WTC11 (cell line): ENCODE measurements at regions of chr18 and their contacts with region 1.

Region 1: GRCh38 chr18:66393463-66393862 is 210.4 kb downstream of the CDH19 start:
- DNase-seq: no peak
- ATAC-seq: peak; percentile 86
- H3K4me3 Mint-ChIP-seq: no peak overlapping the region
- H3K27ac Mint-ChIP-seq: no peak overlapping the region
- H3K4me1 Mint-ChIP-seq: no peaks in the 10 kb centered on the region
- H3K27me3 Mint-ChIP-seq: no peaks in the 10 kb centered on the region; the same call in 1 of the 2 replicates
- CTCF ChIP-seq: no peak

Region 2: DNA sequence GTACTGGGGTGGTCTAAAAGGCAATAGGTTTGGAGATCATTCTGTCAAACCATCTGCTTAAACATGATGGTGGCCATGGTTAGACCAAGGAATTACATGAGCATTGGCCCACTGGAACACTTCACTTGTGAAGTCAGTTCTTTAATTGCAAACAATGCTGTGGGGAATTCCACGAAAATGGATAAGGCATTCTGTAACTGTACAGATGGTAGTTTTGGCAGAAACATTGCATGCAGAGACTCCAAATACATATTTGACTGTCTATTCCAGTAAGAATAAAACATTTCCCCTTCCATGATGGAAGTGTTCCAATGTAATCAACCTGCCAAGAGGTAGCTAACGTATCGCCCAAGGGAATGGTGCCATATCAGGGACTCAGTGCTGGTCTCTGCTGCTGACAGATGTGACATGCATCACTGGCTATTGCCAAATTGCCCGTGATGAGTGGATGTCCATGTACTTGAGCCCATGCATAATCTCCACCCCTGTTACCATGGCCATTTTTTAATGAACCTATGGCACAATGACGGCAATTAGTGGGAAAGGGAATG is 224.7 kb before region 1 on chr18:
- CTCF ChIA-PET with region 1: no interaction called
- POLR2A ChIA-PET with region 1: no interaction called
- DNase-seq: no peak
- ATAC-seq: no peak
- H3K4me3 Mint-ChIP-seq: no peak overlapping the region
- H3K27ac Mint-ChIP-seq: no peak overlapping the region
- H3K4me1 Mint-ChIP-seq: no peaks in the 10 kb centered on the region
- H3K27me3 Mint-ChIP-seq: no peaks in the 10 kb centered on the region
- CTCF ChIP-seq: no peak

Region 3: DNA sequence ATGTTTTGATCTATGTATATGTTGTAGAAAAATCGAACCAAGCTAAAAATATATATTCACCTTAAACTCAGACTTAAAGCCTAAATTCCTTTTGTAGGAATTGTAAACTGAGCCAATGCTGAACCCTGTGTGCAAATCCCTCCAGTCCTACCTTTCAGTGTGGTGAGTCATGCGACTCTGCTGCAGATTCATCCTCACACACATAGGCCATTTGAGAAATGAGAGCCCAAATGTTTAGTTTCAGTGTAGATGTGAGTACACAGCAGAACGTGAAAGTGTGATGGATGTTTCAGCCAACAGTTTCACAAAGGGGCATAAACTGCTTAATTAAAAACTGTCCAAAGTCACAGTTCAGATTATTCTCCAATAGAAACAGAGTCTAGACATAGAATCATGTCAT is 17.2 kb after region 1 on chr18:
- CTCF ChIA-PET with region 1: no interaction called
- POLR2A ChIA-PET with region 1: no interaction called
- DNase-seq: no peak
- ATAC-seq: no peak
- H3K4me3 Mint-ChIP-seq: no peak overlapping the region
- H3K27ac Mint-ChIP-seq: no peak overlapping the region
- H3K4me1 Mint-ChIP-seq: peaks cover 14% of the 10 kb centered on the region
- H3K27me3 Mint-ChIP-seq: no peaks in the 10 kb centered on the region
- CTCF ChIP-seq: no peak

Region 4: DNA sequence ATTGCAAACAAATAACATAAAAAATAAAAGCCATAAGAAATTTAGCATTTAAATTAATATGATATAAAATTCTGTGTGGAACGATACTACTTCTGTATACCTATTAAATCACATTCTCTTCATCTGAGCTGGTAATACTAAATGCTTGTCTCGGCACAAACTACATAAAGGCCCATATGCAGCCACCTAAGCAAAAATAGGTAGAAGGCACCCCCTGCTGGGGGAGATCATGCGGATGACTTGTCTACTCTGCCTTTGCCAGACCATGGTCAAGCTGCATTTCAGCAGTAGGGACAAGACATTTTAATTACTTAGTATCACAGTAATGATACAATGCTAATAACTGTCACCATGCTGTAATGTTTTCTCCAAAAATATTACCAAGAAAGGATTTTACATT is 102.4 kb after region 1 on chr18:
- CTCF ChIA-PET with region 1: interaction called, 10 read pairs
- POLR2A ChIA-PET with region 1: no interaction called
- DNase-seq: peak; percentile 83
- ATAC-seq: peak; percentile 90
- H3K4me3 Mint-ChIP-seq: no peak overlapping the region
- H3K27ac Mint-ChIP-seq: no peak overlapping the region
- H3K4me1 Mint-ChIP-seq: no peaks in the 10 kb centered on the region
- H3K27me3 Mint-ChIP-seq: no peaks in the 10 kb centered on the region
- CTCF ChIP-seq: peak; percentile 40; the same call in 1 of the 2 replicates